ENCODE measurements at regions of chr11 and their contacts with region 1.

Region 1: DNA sequence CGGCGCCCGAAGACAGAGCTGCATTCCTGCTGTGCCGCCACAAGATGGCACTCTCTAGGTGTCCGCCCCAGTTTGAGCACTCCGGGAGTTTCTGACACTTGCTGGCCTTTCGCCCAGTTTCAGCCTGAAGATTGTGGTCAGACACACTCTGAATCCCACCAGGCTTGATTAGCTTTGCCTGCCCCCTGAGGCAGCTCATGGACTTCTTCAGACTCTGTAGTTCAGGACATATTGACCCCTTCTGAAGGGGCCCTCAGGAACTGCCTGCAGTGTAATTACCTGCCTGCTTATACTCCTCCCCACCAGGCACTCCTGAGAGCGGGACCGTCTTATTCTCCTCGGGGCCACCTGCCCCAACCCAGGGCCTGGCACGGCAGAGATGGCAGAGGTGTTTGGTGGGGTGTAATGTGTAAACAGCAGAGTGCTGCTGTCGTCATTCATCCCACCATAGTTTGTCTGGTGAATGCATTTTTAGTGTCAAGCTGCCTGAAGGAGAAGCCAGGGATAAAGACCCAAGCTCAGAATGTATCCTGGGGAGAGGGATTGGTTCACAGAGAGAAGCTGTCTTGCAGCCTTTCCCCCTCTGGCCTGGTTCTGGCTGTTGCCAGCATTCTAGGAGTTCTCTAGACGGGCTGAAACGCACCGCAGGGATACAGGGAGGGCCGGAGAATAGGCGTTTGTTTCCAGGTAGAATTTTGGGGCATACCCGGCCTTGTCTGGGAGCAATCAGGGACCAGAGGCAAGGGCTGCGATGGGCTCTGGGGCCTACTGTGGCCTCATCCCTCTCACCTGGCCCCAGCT is 46.4 kb downstream of the EIF3F start:
- DNase-seq: peak; percentile 27
- H3K4me3 Mint-ChIP-seq: no peak overlapping the region
- H3K27ac Mint-ChIP-seq: no peak overlapping the region
- H3K4me1 Mint-ChIP-seq: peaks cover 5% of the 10 kb centered on the region
- H3K27me3 Mint-ChIP-seq: peaks cover 6% of the 10 kb centered on the region

Region 2: DNA sequence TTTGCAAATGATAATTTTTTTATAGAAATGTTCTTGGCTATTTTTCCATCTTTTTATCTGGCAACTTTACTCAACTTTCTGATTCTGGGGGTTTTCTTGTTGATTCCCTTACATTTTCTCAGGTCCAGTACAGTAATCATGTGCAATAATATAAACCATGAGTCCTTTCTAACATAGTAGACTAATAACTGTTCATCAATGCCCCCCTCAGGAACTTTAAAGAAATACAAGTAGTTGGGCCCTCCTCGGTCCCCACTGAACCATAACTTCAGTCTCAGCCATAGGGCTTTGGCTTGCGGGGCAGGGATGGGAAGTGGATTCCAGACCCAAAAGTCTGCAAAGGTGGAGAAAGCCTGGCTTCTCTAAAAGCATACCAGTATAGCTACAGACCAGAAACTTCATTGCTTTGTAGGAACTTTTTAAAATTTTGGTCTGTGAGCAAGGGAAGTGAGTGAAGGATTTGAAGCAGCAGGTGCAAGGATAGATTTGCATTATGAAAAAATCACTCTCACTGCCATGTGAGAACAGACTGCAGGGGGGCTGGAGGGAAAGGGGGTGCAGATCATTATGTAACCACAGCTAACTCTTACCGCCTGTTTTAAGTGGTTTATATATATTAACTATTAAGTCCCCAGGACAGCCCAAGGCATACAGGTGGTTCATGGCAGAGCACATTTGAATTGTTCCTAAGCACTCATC is 37.1 kb after region 1 on chr11:
- intact Hi-C with region 1: loop called (anchors 2 kb)
- DNase-seq: no peak
- H3K4me3 Mint-ChIP-seq: no peak overlapping the region
- H3K27ac Mint-ChIP-seq: no peak overlapping the region
- H3K4me1 Mint-ChIP-seq: peaks cover 4% of the 10 kb centered on the region
- H3K27me3 Mint-ChIP-seq: peaks cover 15% of the 10 kb centered on the region